Activated T-helper 2 cell treated with anti-CD3 and anti-CD28 coated beads, Interferon-gamma antibody, Interleukin-2, Interleukin-4, amounts not matched to agents 10 μg/mL and 5 μg/mL and 100 μg/mL, durations not matched to agents 14 hours and 24 hours and 36 hours (primary cell): ENCODE measurements at regions of chr3 and their contacts with region 1.

Region 1: GRCh38 chr3:29186982-29187725 is 93.7 kb upstream of the RBMS3 start:
- DNase-seq: no peak
- H3K4me3 Mint-ChIP-seq: no peak overlapping the region
- H3K27ac Mint-ChIP-seq: peak overlapping the region; percentile 39
- H3K4me1 Mint-ChIP-seq: peaks cover 30% of the 10 kb centered on the region
- H3K27me3 Mint-ChIP-seq: no peaks in the 10 kb centered on the region

Region 2: DNA sequence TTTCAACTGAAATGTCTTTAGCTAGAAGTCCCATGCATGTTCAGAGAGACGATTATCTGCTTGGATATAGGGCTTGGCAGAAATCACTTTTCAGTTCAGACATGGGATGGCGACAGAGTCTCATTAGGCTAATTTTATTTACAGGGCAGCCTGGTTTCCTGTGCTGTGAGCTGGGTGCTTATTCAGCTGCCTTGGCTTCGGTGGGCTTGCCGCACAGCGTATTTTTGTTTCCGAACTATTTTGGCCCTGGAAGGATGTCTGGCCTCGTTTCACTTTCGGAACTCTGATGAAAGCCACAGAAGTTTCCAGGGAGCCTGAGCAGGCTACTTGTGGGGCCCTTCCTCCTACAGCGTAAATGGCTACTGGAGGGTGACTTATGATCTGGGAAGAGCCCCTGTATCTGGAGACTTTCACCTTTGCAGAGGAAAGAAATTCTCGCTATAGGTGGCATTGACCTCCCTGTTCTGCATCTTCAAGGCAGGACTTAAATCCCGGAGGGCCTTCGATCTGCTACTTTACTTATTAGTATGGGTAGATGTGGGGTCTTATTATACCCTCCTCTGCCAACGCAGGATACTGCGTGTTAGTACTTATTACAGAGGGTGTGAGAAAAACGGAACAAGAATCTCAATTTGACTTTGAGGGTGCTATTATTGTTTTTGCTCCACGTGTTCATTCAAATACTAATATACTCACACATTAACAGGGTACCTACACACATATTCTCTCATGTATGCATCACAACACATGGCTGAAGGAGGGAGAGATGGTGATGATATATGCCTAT is 270.2 kb before region 1 on chr3:
- intact Hi-C with region 1: loop called (anchors 2 kb)
- DNase-seq: no peak
- H3K4me3 Mint-ChIP-seq: no peak overlapping the region
- H3K27ac Mint-ChIP-seq: no peak overlapping the region
- H3K4me1 Mint-ChIP-seq: peaks cover 20% of the 10 kb centered on the region
- H3K27me3 Mint-ChIP-seq: peaks cover 8% of the 10 kb centered on the region

Region 3: GRCh38 chr3:29091599-29092189 is 95.5 kb before region 1 on chr3:
- intact Hi-C with region 1: no loop called
- DNase-seq: no peak
- H3K4me3 Mint-ChIP-seq: no peak overlapping the region
- H3K27ac Mint-ChIP-seq: peak overlapping the region; percentile 16
- H3K4me1 Mint-ChIP-seq: peaks cover 3% of the 10 kb centered on the region
- H3K27me3 Mint-ChIP-seq: no peaks in the 10 kb centered on the region

Region 4: GRCh38 chr3:29153811-29154210 is 33.3 kb before region 1 on chr3:
- intact Hi-C with region 1: loop called (anchors 1 kb)
- DNase-seq: peak; percentile 19
- H3K4me3 Mint-ChIP-seq: no peak overlapping the region
- H3K27ac Mint-ChIP-seq: no peak overlapping the region
- H3K4me1 Mint-ChIP-seq: peaks cover 9% of the 10 kb centered on the region
- H3K27me3 Mint-ChIP-seq: peaks cover 29% of the 10 kb centered on the region

Region 5: DNA sequence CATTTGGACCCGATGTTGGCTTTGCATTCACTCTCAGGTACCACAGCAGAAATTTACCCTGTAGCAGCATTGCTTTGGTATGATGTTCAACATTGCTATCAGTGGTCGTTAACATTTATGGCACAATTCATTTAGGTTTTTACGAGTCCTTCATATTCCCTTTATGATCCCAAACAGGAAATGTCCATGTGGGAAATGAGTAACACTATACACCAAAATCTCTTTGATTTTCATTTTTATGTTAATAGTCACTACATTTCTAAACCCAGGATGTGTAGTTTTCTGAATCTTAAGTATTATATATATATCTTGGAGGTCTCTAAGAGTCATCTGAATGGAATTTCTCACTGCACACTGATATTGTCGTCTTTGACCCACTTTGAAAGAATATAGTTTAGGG is 15.2 kb after region 1 on chr3:
- intact Hi-C with region 1: no loop called
- DNase-seq: no peak
- H3K4me3 Mint-ChIP-seq: no peak overlapping the region
- H3K27ac Mint-ChIP-seq: no peak overlapping the region
- H3K4me1 Mint-ChIP-seq: no peaks in the 10 kb centered on the region
- H3K27me3 Mint-ChIP-seq: no peaks in the 10 kb centered on the region

Region 6: GRCh38 chr3:29597376-29598013 is 410.3 kb after region 1 on chr3:
- intact Hi-C with region 1: no loop called
- DNase-seq: no peak
- H3K4me3 Mint-ChIP-seq: no peak overlapping the region
- H3K27ac Mint-ChIP-seq: no peak overlapping the region
- H3K4me1 Mint-ChIP-seq: no peaks in the 10 kb centered on the region
- H3K27me3 Mint-ChIP-seq: no peaks in the 10 kb centered on the region